ENCODE measurements at regions of chr19 and their contacts with region 1.

Region 1: GRCh38 chr19:17830567-17831418 is 9.5 kb upstream of the INSL3 start:
- DNase-seq: no peak
- H3K4me3 ChIP-seq: peak overlapping the region; percentile 18
- CTCF ChIP-seq: no peak

Region 2: DNA sequence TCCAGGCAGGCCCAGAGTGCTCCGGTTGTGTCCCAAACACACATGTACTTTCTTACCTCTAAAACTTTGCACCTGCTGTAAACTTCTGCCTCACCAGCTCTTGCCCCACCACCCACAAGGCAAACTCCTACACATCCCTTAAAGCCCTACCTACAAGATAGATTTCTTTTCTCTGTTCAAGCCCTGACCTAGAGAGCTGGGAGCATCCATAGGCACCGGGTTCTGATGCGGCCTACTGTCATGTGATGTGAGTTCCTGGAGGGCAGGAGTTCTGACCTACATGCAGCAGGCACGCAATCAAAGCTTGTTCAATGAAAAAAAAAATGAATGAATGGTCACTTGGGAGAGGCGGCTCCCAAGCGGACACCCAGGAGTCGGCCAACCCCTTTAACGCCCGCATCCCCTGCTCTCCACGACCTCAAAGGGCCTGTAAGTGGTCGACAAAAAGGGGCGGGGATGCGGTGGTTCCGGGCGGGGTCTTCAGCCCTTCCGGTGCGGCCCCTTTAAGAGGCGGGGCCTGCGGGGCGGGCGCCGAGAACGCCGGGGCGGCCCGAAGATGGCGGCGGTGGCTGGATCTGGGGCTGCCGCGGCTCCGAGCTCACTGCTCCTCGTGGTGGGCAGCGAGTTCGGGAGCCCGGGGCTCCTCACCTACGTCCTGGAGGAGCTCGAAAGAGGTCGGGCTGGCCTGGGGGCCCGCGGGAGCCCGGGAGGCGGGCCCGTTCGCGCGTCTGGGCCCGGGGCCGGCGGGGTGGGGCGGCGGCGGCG is 111.7 kb before region 1 on chr19 and contains the start of gene MAP1S:
- in situ Hi-C with region 1: loop called (anchors 10 kb)
- DNase-seq: no peak
- H3K4me3 ChIP-seq: peak within 1 kb of the TSS; percentile 91
- CTCF ChIP-seq: no peak

Measured in astrocyte of the cerebellum (primary cell).